GM10248 (cell line): ENCODE measurements at regions of chr2 and their contacts with region 1.

Region 1: DNA sequence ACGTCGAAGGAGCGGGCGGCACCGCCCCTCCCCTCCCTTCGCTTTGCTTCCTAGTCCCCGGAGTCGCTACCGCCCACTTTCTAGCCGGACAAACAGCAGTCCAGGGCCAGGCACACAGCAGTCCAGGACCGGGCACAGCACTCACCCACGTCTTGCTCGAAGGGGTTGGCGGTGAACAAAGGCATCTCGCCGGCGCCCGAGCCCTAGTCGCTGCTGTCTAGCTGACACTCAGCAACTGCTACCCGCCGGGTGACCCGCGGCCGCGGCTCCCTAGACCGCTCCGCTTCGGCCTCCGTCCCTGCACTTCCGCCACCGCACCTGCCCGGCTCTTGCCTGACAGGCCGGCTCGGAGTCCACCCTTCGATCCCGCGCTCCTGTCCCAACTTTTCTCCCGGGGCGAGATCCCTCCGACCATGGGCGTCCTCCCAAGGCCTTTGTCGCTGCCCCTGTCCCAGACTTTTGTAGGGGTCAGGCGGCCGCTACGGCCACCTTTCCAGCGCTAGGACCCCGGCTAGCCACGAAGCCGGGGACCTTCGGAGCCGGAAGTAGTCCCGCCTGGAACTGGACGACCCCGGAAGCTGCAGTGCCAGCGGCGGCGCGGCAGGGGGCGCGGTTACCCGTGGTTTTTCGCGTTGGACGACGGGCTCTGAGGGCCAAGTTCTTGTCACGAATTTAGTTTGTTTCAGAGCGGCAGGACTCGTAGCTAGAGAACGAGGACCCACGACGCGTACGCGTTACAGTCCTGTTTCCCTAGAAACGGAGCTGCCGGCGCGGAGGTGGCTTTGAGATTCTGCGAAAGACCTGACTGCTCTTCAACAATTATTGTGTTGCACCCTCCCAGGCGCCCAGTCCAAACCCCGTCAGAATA is at the start of gene STAM2:
- DNase-seq: peak; percentile 94
- CTCF ChIP-seq: peak; percentile 97

Region 2: DNA sequence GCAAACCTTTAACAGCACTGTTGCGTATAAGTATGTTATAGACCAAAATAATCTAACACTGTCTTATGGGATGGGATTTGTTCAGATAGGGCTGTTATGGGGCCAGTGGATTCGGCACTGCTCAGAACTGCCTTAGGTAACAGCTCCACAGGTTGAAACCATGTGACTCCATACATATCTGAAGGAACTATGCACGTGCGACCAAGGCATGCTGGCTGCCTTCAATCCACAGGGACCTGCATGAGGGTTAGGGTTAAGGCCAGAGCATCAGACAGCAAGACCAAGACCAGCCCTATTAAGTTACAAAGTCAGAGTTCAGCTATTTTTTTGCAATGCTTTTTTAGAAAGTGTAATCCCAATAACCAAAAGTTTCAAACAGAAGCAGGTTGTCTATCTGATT is 308.6 kb before region 1 on chr2:
- CTCF ChIA-PET with region 1: no interaction called
- POLR2A ChIA-PET with region 1: no interaction called
- DNase-seq: no peak
- CTCF ChIP-seq: no peak

Region 3: GRCh38 chr2:152047819-152048471 is 127.7 kb before region 1 on chr2:
- CTCF ChIA-PET with region 1: interaction called, 13 read pairs
- POLR2A ChIA-PET with region 1: no interaction called
- DNase-seq: no peak
- CTCF ChIP-seq: peak; percentile 45

Region 4: DNA sequence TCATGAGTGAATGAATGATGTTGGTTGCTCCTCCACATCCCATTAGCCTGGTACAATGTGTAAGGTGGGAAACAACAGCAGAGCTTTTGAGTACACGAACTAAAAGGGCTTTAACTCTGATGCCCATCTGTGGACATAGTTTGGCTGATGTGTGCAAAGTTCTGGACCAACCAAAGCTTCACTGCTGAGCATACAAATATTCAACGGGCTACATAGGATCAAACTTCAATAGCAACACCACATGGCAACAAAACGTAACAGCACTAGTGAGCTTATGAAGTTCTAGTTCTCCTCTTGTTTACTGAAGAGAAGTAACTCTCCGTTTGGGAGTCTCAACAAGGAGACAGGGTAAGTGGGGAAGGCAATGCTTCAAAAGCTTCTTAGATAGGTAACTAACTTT is 20.5 kb before region 1 on chr2:
- CTCF ChIA-PET with region 1: interaction called, 11 read pairs
- POLR2A ChIA-PET with region 1: interaction called, 3 read pairs
- DNase-seq: no peak
- CTCF ChIP-seq: peak; percentile 19

Region 5: DNA sequence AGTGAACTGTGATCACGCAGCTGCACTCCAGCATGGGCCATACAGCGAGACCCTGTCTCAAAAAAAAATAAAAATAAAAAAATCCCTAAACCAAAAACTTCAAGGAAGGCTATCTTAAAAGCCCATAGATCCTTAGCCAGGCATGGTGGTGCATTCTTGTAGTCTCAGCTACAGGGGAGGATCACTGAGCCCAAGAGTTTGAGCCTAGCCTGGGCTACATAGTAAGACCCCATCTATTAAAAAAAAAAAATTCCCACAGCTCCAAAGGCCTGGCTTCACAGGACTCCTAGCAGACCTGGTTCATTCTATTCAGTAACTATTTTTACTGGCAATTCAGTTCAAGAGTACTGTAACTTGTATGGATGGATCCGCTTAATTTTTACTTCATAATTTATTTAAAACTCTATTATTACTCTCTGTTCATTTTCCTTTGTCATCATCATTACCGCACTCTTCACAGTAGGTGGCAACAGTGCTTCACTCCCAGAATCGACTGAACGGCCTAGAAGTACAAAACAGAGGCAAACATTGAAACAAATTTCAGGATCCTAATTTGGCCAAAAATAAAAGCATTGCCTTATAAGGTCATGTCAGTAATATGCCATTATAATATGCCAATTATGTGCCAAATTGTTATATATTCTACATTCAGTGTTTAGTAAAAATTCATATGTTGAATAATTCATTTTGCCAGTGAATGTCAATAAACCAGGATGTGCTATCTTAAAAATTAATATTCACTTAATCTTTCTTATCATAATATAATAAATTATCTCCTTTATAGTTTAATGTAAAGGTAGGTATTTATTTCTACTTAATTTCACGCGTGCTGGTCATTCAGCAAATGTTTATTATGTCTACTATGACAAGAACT is 14.2 kb after region 1 on chr2:
- CTCF ChIA-PET with region 1: interaction called, 29 read pairs
- POLR2A ChIA-PET with region 1: no interaction called
- DNase-seq: peak; percentile 48
- CTCF ChIP-seq: peak; percentile 79

Region 6: GRCh38 chr2:152473151-152473857 is 297.6 kb after region 1 on chr2:
- CTCF ChIA-PET with region 1: no interaction called
- POLR2A ChIA-PET with region 1: no interaction called
- DNase-seq: no peak
- CTCF ChIP-seq: no peak

Region 7: GRCh38 chr2:152627351-152627957 is 451.8 kb after region 1 on chr2:
- CTCF ChIA-PET with region 1: interaction called, 60 read pairs
- POLR2A ChIA-PET with region 1: no interaction called
- DNase-seq: peak; percentile 27
- CTCF ChIP-seq: peak; percentile 59